ENCODE measurements at regions of chr11 and their contacts with region 1.

Region 1: GRCh38 chr11:85595285-85595884 is 31.8 kb downstream of the DLG2 start:
- DNase-seq: no peak

Region 2: GRCh38 chr11:84558085-84558905 is 1037.1 kb before region 1 on chr11:
- intact Hi-C with region 1: loop called (anchors 5 kb)
- DNase-seq: peak in 6 of 10 donors; percentile 20 to 76 (median 36)

Region 3: GRCh38 chr11:84800755-84801346 is 794.5 kb before region 1 on chr11:
- intact Hi-C with region 1: loop called (anchors 2 kb)
- DNase-seq: no peak

Region 4: GRCh38 chr11:86440305-86440716 is 844.9 kb after region 1 on chr11:
- intact Hi-C with region 1: no loop called
- DNase-seq: no peak

Measured in posterior cingulate gyrus (tissue), 11 donors.